Activated T-helper 2 cell treated with anti-CD3 and anti-CD28 coated beads, Interferon-gamma antibody, Interleukin-2, Interleukin-4, amounts not matched to agents 10 μg/mL and 5 μg/mL and 100 μg/mL, durations not matched to agents 14 hours and 24 hours and 36 hours (primary cell): ENCODE measurements at regions of chr10 and their contacts with region 1.

Region 1: DNA sequence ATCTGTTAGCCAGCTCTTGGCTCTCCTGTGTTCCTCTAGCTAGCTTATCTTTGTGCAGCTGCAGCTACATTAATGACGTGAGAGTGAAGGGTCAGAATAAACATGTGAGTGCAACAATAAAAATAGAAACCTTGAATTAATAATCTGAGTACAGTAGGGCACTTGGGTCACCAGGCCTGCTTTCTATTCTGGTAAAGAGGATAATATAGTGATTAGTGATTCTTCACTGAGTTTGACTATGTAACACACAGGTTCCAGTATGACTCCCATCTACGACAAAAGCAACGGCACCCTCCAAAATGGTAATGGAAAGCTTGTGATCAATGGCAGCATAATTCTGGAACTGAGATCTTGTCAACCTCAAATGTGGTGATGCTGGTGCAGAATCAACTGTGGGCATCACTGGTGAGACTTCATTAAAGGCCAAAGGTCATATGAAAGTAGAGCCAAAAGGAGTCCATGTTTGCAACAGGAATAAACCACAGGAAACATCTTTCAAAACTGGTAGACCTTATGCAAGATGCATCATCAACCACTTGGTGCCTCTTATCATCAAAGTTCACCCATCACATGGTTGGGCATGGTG is 77.6 kb downstream of the NRBF2 start:
- DNase-seq: no peak
- H3K4me3 Mint-ChIP-seq: no peak overlapping the region
- H3K27ac Mint-ChIP-seq: peak overlapping the region; percentile 50
- H3K4me1 Mint-ChIP-seq: peaks cover 44% of the 10 kb centered on the region
- H3K27me3 Mint-ChIP-seq: no peaks in the 10 kb centered on the region

Region 2: DNA sequence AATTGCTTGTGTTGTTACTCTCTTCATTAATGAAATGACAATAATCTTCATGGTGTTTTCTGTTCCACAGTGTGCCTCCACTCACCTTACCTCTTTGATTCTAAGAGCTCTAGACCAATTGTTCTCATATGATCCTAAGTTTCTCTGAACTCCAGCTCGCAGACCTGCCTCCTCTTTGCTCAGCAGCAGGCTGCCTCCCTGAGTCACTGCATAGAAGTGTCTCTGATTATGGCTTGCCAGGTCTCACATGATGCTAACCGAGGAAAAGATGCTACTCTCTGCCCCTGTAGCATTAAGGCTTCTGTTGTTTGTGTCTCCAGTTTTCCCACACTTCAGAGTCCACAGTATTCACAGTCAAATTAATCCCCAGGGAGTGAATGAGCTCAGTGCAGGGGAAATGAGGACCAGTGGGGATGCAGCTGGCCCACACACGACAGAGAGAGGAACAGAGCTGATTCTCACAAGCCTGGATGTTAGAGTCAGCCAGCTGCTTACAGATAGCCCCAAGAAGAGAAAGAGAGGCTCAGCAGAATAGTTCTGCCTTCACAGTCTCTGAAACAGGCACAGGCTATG is 248.7 kb before region 1 on chr10:
- intact Hi-C with region 1: no loop called
- DNase-seq: no peak
- H3K4me3 Mint-ChIP-seq: no peak overlapping the region
- H3K27ac Mint-ChIP-seq: no peak overlapping the region
- H3K4me1 Mint-ChIP-seq: no peaks in the 10 kb centered on the region
- H3K27me3 Mint-ChIP-seq: peaks cover 21% of the 10 kb centered on the region

Region 3: DNA sequence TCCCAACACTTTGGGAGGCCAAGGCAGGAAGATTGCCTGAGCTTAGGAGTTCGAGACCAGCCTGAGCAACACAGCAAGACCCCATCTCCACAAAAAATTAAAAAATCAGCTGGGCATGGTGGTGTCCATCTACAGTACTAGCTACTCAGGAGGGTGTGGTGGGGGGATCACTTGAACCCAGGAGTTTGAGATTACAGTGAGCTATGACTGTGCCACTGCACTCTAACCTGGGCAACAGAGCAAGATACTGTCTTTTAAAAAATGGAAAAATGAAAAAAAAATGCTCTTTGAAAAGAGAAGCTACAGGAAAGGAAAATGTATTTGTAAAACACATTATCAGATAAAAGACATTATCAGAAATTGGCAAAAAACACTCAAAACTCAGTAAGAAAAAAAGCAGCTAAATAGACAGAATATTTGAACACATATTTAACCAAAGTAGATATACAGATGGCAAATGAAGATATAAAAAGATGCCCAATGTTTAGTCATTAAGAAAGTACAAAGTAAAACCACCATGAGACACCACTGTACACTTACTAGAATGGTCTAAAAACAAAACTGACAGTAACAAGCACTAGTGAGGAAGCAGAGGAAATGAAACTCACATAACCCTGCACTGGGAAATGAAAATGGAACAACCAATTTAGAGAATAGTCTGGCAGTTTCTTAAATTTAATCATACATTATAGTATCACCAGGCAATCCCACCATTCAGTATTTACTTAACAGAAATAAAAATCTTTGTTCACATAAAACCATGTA is 37.1 kb before region 1 on chr10:
- intact Hi-C with region 1: loop called (anchors 2 kb)
- DNase-seq: no peak
- H3K4me3 Mint-ChIP-seq: no peak overlapping the region
- H3K27ac Mint-ChIP-seq: peak overlapping the region; percentile 29
- H3K4me1 Mint-ChIP-seq: peaks cover 55% of the 10 kb centered on the region
- H3K27me3 Mint-ChIP-seq: no peaks in the 10 kb centered on the region

Region 4: GRCh38 chr10:63247771-63248170 is 37.1 kb after region 1 on chr10:
- intact Hi-C with region 1: no loop called
- DNase-seq: no peak
- H3K4me3 Mint-ChIP-seq: no peak overlapping the region
- H3K27ac Mint-ChIP-seq: no peak overlapping the region
- H3K4me1 Mint-ChIP-seq: peaks cover 30% of the 10 kb centered on the region
- H3K27me3 Mint-ChIP-seq: no peaks in the 10 kb centered on the region